ENCODE measurements at regions of chr2 and their contacts with region 1.

Region 1: DNA sequence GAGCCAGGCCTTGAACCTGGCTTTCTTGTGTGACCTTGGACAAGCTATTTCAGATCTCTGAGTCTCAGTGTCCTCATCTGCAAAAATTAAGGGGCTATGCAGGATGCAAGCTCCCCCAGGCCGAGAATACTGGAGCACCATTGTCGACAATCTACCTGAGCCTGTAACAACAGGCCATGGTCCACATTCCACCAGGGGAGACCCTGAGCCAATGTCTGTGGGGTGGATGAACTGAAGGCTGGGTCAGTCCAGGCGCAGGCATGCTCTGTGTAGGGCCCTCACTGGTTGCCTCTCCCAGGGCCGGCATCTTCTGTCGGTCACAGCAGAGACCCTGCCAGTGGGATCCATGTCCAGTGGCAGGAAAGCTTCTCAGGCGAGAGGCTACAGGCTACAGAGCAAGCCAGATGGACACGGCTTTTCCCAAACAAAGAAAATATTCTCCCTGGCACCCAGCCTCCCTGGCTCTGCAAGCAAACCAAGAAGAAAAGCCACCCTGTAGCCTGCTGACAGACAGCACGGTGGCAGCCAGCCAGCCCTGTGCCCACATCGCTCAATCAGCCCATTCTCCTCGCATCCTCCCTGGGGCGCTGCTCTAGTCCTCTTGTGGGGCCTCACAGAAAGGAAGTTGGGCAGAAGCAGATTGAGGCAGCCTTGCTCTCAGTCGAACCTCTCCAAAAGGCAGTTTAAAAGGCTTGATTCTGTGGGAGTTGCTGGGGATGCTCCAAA is 48.7 kb upstream of the FZD7 start:
- DNase-seq: no peak
- ATAC-seq: peak; percentile 27; the same call in 1 of the 2 replicates
- H3K4me3 ChIP-seq: no peak overlapping the region
- H3K27ac ChIP-seq: no peak overlapping the region
- H3K4me1 ChIP-seq: no peaks in the 10 kb centered on the region
- H3K27me3 ChIP-seq: no peaks in the 10 kb centered on the region
- CTCF ChIP-seq: no peak

Region 2: GRCh38 chr2:201517094-201517493 is 467.9 kb before region 1 on chr2:
- CTCF ChIA-PET with region 1: no interaction called
- POLR2A ChIA-PET with region 1: no interaction called
- in situ Hi-C with region 1: no loop called
- intact Hi-C with region 1: no loop called
- DNase-seq: no peak
- ATAC-seq: no peak
- H3K4me3 ChIP-seq: no peak overlapping the region
- H3K27ac ChIP-seq: no peak overlapping the region
- H3K4me1 ChIP-seq: no peaks in the 10 kb centered on the region
- H3K27me3 ChIP-seq: peaks cover 7% of the 10 kb centered on the region; the same call in 1 of the 2 replicates
- CTCF ChIP-seq: no peak

Region 3: GRCh38 chr2:201966691-201967438 is 18.1 kb before region 1 on chr2:
- CTCF ChIA-PET with region 1: interaction called, 12 read pairs
- POLR2A ChIA-PET with region 1: no interaction called
- in situ Hi-C with region 1: no loop called
- intact Hi-C with region 1: no loop called
- DNase-seq: no peak
- ATAC-seq: no peak
- H3K4me3 ChIP-seq: no peak overlapping the region
- H3K27ac ChIP-seq: no peak overlapping the region
- H3K4me1 ChIP-seq: no peaks in the 10 kb centered on the region
- H3K27me3 ChIP-seq: no peaks in the 10 kb centered on the region
- CTCF ChIP-seq: no peak

Region 4: GRCh38 chr2:202278944-202279343 is 294.0 kb after region 1 on chr2:
- CTCF ChIA-PET with region 1: no interaction called
- POLR2A ChIA-PET with region 1: no interaction called
- in situ Hi-C with region 1: no loop called
- intact Hi-C with region 1: no loop called
- DNase-seq: no peak
- ATAC-seq: peak; percentile 59; the same call in 1 of the 2 replicates
- H3K4me3 ChIP-seq: no peak overlapping the region
- H3K27ac ChIP-seq: no peak overlapping the region
- H3K4me1 ChIP-seq: peaks cover 15% of the 10 kb centered on the region
- H3K27me3 ChIP-seq: no peaks in the 10 kb centered on the region
- CTCF ChIP-seq: no peak